ENCODE measurements at regions of chr2 and their contacts with region 1.

Region 1: DNA sequence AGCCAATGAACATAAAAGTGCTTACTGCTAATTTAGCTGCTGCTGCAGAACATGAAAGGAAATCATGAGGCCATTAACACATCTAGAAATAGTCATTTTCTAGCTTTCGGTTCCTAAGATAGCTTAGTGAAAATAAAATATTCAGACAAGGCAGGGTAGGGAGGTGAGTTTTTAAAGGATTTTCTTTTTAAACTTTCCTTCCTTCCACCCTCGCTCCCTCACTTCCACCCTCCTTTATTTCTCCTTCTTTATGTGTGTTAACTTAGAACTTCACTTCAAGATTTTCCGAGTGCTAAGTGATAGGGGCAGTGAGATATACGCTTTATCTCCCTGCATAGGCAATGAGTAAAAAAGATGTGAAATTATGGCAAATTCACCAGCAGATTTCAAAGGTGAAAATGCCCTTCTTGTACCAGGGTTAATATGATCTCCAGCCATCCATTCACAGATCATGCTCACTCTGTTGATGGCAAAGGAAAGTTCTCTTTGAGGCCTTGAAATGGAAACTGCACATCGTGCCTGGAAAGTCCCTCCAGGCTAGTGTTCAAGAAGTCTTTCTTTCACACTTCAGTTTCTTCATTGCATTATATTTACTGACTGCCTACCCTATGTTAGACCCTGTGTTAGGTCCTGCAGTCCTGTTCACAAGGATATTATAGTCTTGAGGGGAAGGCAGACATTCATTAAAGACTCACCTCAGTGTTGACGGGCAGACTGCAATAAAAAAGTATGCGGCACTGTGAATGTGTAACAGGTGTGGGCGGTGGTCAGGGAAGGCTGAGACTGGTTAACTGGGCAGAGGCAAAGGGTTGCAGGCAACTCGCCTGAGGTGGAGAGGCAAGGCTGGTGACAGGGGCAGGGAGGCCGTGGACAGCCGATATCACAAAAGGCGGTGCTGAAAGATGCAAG is 200.8 kb downstream of the PLCL1 start:
- DNase-seq: peak; percentile 79
- H3K4me3 Mint-ChIP-seq: peak overlapping the region; percentile 66
- H3K27ac Mint-ChIP-seq: peak overlapping the region; percentile 83
- H3K4me1 Mint-ChIP-seq: peaks cover 31% of the 10 kb centered on the region
- H3K27me3 Mint-ChIP-seq: no peaks in the 10 kb centered on the region

Region 2: DNA sequence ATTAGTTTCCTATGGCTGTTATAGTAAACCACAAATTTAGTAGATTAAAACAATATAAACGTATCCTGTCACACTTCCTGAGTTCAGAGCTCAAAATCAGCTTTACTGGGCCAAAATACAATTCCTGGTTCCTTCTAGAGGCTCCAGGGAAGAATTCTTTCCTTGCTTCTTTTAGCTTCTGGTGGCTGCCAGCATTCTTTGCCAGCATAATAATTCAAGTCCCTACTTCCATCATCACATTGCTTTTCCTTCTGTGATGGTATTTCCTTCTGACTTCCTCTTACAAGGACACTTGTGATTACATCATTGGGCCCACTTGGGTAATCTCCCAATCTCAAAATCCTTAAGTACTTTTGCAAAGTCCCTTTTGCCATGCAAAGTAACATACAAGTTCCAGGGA is 448.7 kb before region 1 on chr2:
- intact Hi-C with region 1: no loop called
- DNase-seq: no peak
- H3K4me3 Mint-ChIP-seq: no peak overlapping the region
- H3K27ac Mint-ChIP-seq: no peak overlapping the region
- H3K4me1 Mint-ChIP-seq: no peaks in the 10 kb centered on the region
- H3K27me3 Mint-ChIP-seq: no peaks in the 10 kb centered on the region

Region 3: DNA sequence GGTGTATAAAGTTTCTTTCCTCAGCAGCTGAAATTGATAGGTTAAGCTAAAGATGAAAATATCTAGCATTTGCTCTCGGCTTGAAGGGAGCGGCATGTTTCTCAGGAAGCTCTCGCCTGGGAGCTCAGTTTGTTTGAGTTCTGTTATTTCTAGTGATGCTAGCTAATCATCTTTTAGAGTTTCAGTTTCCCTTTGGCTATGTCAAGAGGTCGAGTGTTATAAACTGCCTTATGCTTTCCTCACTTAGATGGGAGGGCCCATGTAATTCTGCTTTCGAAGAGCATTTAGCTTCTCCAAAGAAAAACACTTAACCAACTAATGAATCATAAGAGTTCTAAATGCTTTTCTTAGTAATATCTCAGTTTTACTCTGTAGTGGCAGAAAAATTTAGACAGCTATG is 167.1 kb before region 1 on chr2:
- intact Hi-C with region 1: loop called (anchors 2 kb)
- DNase-seq: peak; percentile 79
- H3K4me3 Mint-ChIP-seq: peak overlapping the region; percentile 64
- H3K27ac Mint-ChIP-seq: peak overlapping the region; percentile 70
- H3K4me1 Mint-ChIP-seq: peaks cover 26% of the 10 kb centered on the region
- H3K27me3 Mint-ChIP-seq: peaks cover 7% of the 10 kb centered on the region

Region 4: GRCh38 chr2:197934934-197935289 is 70.3 kb before region 1 on chr2:
- intact Hi-C with region 1: loop called (anchors 2 kb)
- DNase-seq: peak; percentile 57
- H3K4me3 Mint-ChIP-seq: peak overlapping the region; percentile 15
- H3K27ac Mint-ChIP-seq: no peak overlapping the region
- H3K4me1 Mint-ChIP-seq: peaks cover 14% of the 10 kb centered on the region
- H3K27me3 Mint-ChIP-seq: peaks cover 3% of the 10 kb centered on the region

Region 5: GRCh38 chr2:197969391-197969893 is 35.7 kb before region 1 on chr2:
- intact Hi-C with region 1: loop called (anchors 5 kb)
- DNase-seq: no peak
- H3K4me3 Mint-ChIP-seq: no peak overlapping the region
- H3K27ac Mint-ChIP-seq: no peak overlapping the region
- H3K4me1 Mint-ChIP-seq: peaks cover 6% of the 10 kb centered on the region
- H3K27me3 Mint-ChIP-seq: no peaks in the 10 kb centered on the region

Region 6: GRCh38 chr2:198042189-198042588 is 37.0 kb after region 1 on chr2:
- intact Hi-C with region 1: loop called (anchors 1 kb)
- DNase-seq: no peak
- H3K4me3 Mint-ChIP-seq: no peak overlapping the region
- H3K27ac Mint-ChIP-seq: no peak overlapping the region
- H3K4me1 Mint-ChIP-seq: peaks cover 6% of the 10 kb centered on the region
- H3K27me3 Mint-ChIP-seq: no peaks in the 10 kb centered on the region

Measured in activated CD4-positive, alpha-beta T cell treated with anti-CD3 and anti-CD28 coated beads, Interleukin-2, amount 10 ng/mL, durations not matched to agents 24 days and 14 days (primary cell).